ENCODE measurements at regions of chr14 and their contacts with region 1.

Region 1: GRCh38 chr14:60965402-60965801 is 15.5 kb downstream of the TRMT5 start:
- DNase-seq: no peak
- H3K4me3 Mint-ChIP-seq: no peak overlapping the region
- H3K27ac Mint-ChIP-seq: peak overlapping the region; percentile 52
- H3K4me1 Mint-ChIP-seq: peaks cover 6% of the 10 kb centered on the region
- H3K27me3 Mint-ChIP-seq: no peaks in the 10 kb centered on the region

Region 2: DNA sequence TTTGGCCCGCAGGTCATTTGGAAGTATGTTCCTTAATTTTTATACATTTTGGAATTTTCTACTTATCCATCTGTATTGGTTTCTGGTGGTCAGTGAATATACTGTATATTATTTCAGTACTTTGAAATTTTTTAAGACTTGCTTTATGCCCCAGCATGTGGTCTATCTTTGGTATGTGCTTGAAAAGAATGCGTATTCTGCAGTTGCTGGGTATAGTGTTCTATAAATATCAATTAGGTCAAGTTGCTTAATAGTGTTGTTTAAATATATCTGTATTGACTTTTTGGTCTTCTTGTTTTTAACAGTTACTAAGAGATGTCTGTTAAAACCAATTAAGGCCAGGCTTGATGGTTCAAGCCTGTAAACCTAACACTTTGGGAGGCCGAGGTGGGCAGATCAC is 294.4 kb before region 1 on chr14:
- intact Hi-C with region 1: no loop called
- DNase-seq: no peak
- H3K4me3 Mint-ChIP-seq: no peak overlapping the region
- H3K27ac Mint-ChIP-seq: no peak overlapping the region
- H3K4me1 Mint-ChIP-seq: no peaks in the 10 kb centered on the region
- H3K27me3 Mint-ChIP-seq: peaks cover 9% of the 10 kb centered on the region

Region 3: DNA sequence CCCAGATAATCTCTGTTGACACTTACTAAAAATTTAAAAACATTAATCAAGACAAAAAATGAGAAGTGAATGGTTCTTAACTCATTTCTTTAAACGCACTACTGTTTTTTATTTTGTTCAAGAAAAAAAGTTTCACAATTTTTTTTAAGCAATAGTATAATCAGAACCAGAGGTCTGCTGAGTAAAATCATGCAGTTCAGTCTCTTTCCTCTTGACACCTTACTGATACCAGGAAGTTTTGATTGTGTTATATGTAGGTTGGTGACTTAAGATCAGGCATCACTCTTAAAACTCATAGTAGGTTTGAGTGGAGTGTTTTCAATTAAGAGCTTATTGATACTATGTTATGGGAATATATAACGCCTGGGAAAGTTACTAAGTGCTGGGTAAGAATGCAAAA is 105.9 kb before region 1 on chr14:
- intact Hi-C with region 1: loop called (anchors 5 kb)
- DNase-seq: no peak
- H3K4me3 Mint-ChIP-seq: no peak overlapping the region
- H3K27ac Mint-ChIP-seq: no peak overlapping the region
- H3K4me1 Mint-ChIP-seq: peaks cover 8% of the 10 kb centered on the region
- H3K27me3 Mint-ChIP-seq: peaks cover 5% of the 10 kb centered on the region

Region 4: DNA sequence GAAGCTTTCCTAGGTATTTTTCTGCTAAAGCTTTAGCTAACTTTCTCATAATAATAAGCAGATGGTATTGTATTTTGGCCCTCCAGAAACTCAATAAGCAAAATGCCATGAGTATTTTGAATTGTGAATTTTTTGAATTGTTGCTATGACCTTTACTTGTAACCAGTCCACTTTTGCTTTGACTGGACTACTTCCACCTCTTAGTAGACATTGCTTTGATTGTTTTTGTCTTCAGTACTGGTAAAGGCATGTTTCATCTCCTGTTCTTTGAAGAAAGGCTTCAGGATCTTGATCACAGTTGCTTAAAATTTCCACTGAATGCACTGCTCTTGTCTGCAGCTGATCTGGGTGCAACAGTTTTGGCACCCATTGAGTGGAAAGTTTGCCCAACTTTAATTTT is 86.9 kb before region 1 on chr14:
- intact Hi-C with region 1: loop called (anchors 5 kb)
- DNase-seq: no peak
- H3K4me3 Mint-ChIP-seq: no peak overlapping the region
- H3K27ac Mint-ChIP-seq: no peak overlapping the region
- H3K4me1 Mint-ChIP-seq: peaks cover 7% of the 10 kb centered on the region
- H3K27me3 Mint-ChIP-seq: no peaks in the 10 kb centered on the region

Region 5: DNA sequence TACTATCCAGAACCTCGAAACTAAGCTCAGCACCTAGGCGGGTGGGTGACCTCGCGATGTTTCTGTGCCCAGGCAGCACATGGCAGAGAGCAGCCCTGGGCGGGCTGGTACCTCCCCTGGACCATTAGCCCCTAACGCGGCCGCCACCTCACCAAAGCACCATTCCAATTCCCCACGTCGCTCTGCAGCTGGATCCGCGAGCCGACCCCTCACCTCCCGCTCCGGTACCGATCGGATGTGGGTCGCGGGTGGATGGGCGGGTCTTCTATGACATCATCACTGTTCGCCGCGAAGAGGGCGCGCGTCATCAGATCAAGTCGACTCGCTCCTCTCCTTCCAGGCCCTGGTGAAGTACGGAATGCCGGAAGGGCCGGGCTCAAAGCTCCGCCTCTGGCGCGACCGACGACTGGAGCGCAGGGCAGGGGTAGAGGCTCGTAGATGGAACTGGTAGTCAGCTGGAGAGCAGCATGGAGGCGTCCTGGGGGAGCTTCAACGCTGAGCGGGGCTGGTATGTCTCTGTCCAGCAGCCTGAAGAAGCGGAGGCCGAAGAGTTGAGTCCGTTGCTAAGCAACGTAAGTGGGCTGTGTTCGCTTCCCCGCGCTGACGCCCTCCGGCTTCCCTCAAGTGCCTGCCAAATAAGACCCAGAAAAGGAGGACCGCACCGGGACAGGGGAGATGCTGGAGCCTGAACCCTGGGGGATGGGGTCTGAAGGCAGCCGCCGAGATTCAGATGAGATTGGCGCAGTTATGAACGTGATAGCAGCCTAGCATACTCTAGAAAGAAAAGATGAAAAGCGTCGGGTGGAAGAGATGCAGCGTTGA is 15.6 kb after region 1 on chr14 and contains the starts of genes SLC38A6 and TRMT5:
- intact Hi-C with region 1: loop called (anchors 2 kb)
- DNase-seq: peak; percentile 98
- H3K4me3 Mint-ChIP-seq: no peak within 1 kb of the TSS
- H3K27ac Mint-ChIP-seq: no peak within 1 kb of the TSS
- H3K4me1 Mint-ChIP-seq: peaks cover 21% of the 10 kb centered on the region
- H3K27me3 Mint-ChIP-seq: no peaks in the 10 kb centered on the region
- total RNA-seq, gene SLC38A6: 4.7 and 5.9 TPM in 2 replicates
- total RNA-seq, gene TRMT5: 16.1 and 18.0 TPM in 2 replicates